CD4-positive, alpha-beta T cell (primary cell): ENCODE measurements at regions of chr12 and their contacts with region 1.

Region 1: GRCh38 chr12:102484428-102484958 is 4.1 kb upstream of the IGF1 start:
- DNase-seq: peak; percentile 9 to 71 (median 29)
- ATAC-seq: peak; percentile 44
- H3K4me3 ChIP-seq: peak overlapping the region; percentile 21
- H3K4me3 Mint-ChIP-seq: peak overlapping the region; percentile 68
- H3K27ac ChIP-seq: no peak overlapping the region
- H3K27ac Mint-ChIP-seq: no peak overlapping the region
- H3K4me1 ChIP-seq: peaks cover 3% of the 10 kb centered on the region
- H3K4me1 Mint-ChIP-seq: peaks cover 8% of the 10 kb centered on the region
- H3K27me3 ChIP-seq: no peaks in the 10 kb centered on the region
- H3K27me3 Mint-ChIP-seq: peaks cover 7% of the 10 kb centered on the region
- CTCF ChIP-seq: peak; percentile 94

Region 2: DNA sequence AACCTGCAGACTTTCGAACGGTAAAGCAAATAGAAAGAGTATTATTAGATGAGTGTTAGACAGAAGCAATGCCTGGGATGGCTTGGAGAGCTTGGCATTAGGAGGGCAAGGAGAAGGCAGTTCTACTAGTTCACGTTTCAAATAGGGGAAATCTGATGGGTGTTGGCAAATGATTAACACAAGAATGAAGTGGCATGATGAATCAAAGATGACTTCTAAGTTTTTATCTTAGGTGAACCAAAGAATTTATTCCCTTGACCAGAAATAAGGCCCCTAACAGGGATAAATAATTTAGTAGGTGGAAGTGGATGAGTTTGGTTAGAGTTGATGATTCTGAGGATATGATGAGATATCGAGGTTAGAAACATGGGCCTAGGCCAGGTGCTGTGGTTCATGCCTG is 568.6 kb before region 1 on chr12:
- CTCF ChIA-PET with region 1: no interaction called
- POLR2A ChIA-PET with region 1: no interaction called
- intact Hi-C with region 1: loop called in 1 of 2 experiments (anchors 2 kb)
- DNase-seq: no peak
- ATAC-seq: no peak
- H3K4me3 ChIP-seq: no peak overlapping the region
- H3K4me3 Mint-ChIP-seq: no peak overlapping the region
- H3K27ac ChIP-seq: no peak overlapping the region
- H3K27ac Mint-ChIP-seq: no peak overlapping the region
- H3K4me1 ChIP-seq: peaks cover 5% of the 10 kb centered on the region
- H3K4me1 Mint-ChIP-seq: peaks cover 5% of the 10 kb centered on the region
- H3K27me3 ChIP-seq: no peaks in the 10 kb centered on the region
- H3K27me3 Mint-ChIP-seq: no peaks in the 10 kb centered on the region
- CTCF ChIP-seq: no peak

Region 3: DNA sequence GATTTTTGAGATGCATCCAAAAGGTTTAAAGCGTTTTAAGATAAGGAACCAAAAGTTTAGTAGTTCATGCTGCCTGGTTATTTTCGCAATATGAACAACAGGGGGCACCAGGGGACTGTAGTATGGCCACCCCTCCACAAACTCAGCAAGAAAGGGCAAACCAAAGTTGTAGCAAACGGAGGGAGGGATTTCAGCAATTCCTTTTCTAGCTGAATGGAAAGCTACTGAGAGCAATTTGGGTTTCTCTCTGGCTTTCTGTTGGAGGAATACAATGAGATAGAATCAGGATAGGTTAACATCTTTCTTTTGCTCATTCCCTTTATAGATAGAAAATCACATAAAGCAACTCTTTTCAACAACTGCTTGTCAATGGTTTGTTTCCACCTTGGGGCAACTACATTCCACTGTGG is 544.6 kb before region 1 on chr12:
- CTCF ChIA-PET with region 1: interaction called, 3 read pairs
- POLR2A ChIA-PET with region 1: no interaction called
- intact Hi-C with region 1: loop called (anchors 1 kb)
- DNase-seq: peak; percentile 20 to 75 (median 38)
- ATAC-seq: peak; percentile 71
- H3K4me3 ChIP-seq: no peak overlapping the region
- H3K4me3 Mint-ChIP-seq: no peak overlapping the region
- H3K27ac ChIP-seq: no peak overlapping the region
- H3K27ac Mint-ChIP-seq: no peak overlapping the region
- H3K4me1 ChIP-seq: no peaks in the 10 kb centered on the region
- H3K4me1 Mint-ChIP-seq: no peaks in the 10 kb centered on the region
- H3K27me3 ChIP-seq: no peaks in the 10 kb centered on the region
- H3K27me3 Mint-ChIP-seq: peaks cover 19% of the 10 kb centered on the region
- CTCF ChIP-seq: peak; percentile 74

Region 4: DNA sequence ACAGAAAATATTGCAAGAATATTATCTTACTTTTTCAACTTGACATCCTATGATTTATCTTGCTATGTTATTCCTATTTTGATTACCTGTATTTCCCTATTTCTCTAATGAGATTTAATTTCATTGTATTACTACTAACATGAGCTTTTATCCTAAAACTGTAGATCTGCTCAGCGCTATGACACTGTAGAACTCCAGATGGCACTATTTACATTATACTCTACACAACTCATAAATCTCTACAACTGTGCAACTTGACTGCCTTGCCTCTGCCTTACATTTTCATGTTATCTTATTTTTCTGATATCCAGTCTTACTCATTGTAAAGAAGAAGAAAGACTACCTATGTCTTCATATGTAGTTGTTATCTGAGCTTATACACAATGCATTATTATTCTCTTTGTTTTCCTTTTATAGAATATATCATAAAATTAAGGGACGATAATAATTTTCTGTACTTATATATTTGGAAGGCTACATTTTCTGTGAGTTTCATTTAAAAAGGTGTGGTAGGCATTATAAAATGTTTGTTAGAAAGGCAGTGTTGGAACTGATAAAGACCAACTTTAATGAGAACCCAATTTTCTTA is 388.7 kb before region 1 on chr12:
- CTCF ChIA-PET with region 1: no interaction called
- POLR2A ChIA-PET with region 1: no interaction called
- intact Hi-C with region 1: loop called (anchors 5 kb)
- DNase-seq: peak in 3 of 14 experiments; percentile 8 to 16 (median 12)
- ATAC-seq: no peak
- H3K4me3 ChIP-seq: no peak overlapping the region
- H3K4me3 Mint-ChIP-seq: no peak overlapping the region
- H3K27ac ChIP-seq: no peak overlapping the region
- H3K27ac Mint-ChIP-seq: no peak overlapping the region
- H3K4me1 ChIP-seq: no peaks in the 10 kb centered on the region
- H3K4me1 Mint-ChIP-seq: no peaks in the 10 kb centered on the region
- H3K27me3 ChIP-seq: no peaks in the 10 kb centered on the region
- H3K27me3 Mint-ChIP-seq: no peaks in the 10 kb centered on the region
- CTCF ChIP-seq: peak; percentile 45